Right ventricle myocardium inferior (tissue), 1 donor: ENCODE measurements at regions of chr1 and their contacts with region 1.

Region 1: GRCh38 chr1:170698301-170699275 is 34.7 kb downstream of the PRRX1 start:
- DNase-seq: no peak
- ATAC-seq: peak; percentile 66

Region 2: GRCh38 chr1:170580636-170581440 is 117.8 kb before region 1 on chr1:
- intact Hi-C with region 1: no loop called
- DNase-seq: no peak
- ATAC-seq: peak; percentile 81

Region 3: DNA sequence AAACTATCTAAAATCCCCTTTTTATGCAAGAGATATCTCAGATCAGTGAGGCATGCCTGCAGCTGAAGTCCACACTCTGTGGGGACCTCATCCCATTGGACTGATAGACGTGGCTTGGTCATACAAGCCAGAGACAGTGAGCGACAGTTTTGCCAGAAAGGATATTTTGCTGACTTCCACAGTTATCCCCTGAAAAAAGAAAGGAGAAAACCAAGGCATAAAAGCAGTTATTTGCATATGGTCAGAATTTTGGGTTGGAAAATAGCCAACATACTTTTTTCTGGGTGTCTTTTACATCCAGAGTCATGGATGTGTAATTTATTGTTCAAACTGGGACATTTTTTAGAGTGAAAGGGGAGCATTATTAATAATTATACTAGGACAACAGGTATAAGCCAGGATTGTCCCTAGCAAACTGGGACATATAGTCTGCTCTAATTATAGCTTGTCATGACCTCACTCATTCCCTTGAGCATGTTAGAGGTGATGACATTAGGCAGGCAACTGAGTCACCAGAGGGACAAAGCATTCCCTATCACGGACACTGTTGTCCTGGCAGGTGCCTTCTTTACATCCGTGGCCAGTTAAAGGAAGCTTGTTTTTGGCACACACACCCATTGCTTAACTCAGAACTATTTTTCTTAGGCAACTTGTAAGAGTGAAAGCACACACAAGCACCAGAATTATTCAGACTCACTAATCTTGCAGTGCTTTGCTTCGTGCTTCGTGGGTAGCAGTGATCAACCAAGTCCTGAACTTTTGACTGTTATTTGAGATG is 30.8 kb after region 1 on chr1:
- intact Hi-C with region 1: loop called (anchors 5 kb)
- DNase-seq: no peak
- ATAC-seq: peak; percentile 87

Region 4: DNA sequence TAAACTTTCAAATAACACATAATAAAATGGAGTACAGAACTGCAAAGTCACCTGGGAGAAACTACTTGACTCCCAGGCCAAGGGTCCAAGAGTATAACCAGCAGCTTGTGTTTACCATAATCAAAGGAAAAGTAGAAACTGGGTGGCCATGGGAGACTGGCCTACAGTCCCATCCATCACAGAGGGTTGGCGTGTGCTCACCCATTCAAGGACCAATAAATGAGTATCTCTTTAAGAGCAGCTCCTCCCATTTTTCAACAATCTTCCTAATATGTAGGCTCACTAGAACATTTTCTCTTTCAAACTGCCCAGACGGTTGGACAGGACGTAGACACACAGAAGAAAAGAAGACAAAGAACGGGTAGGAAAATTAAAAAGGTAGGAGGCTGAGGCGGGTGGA is 392.0 kb after region 1 on chr1 and contains the start of gene FMO3:
- intact Hi-C with region 1: loop called (anchors 5 kb)
- DNase-seq: no peak
- ATAC-seq: no peak
- total RNA-seq, gene FMO3: 1.3 TPM